Dorsolateral prefrontal cortex (tissue), 120 donors: ENCODE measurements at regions of chr11 and their contacts with region 1.

Region 1: GRCh38 chr11:66568124-66568916 is at the start of gene CTSF:
- DNase-seq: peak; percentile 88 to 97 (median 95)
- H3K4me3 ChIP-seq: peak within 1 kb of the TSS; percentile 58 to 97 (median 81)
- H3K27ac ChIP-seq: peak within 1 kb of the TSS; percentile 17 to 96 (median 86)
- H3K27me3 ChIP-seq: no peaks in the 10 kb centered on the region
- CTCF ChIP-seq: peak in 17 of 56 donors; percentile 5 to 39 (median 25)
- total RNA-seq, gene CTSF: 112 to 186 (median 141) TPM

Region 2: DNA sequence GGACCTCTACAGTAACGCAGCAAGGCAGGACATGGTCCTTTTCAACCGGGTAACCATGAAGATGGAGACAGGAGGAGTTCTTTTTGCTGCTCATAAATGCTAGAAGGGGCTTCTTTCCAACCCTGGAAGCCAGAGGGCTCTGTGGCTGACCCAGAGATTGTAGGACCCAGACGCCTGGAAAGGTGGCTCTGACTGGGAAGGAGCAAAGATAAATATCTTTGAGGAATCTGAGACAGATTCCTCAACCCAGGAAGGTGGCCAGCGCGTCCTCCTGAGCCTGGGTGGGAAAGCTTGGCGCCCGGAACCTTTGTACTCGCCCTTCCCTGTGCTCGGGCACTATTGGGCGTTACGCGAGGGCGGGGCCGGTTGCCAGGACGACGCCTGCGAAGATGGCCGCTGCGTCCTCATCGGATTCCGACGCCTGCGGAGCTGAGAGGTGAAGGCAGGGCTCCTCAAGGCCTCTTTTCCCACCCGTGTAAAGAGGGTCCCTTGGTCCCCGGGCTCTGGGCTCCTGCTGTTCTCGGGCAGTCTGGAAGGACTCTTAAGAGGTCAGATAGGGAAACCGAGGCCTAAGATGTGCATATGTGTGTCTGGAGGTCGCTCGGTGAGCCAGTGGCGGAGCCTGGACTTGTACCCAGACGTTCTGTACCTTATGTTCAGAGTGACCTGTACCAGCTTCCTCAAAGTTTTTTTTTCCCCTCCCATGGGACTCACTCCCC is 57.9 kb before region 1 on chr11 and contains the start of gene BBS1:
- intact Hi-C with region 1: loop called in 1 of 2 experiments (anchors 1 kb)
- DNase-seq: peak; percentile 76 to 93 (median 84)
- H3K4me3 ChIP-seq: peak within 1 kb of the TSS; percentile 59 to 97 (median 85)
- H3K27ac ChIP-seq: peak within 1 kb of the TSS in 56 of 59 donors; percentile 1 to 88 (median 72)
- H3K27me3 ChIP-seq: no peaks in the 10 kb centered on the region
- CTCF ChIP-seq: peak in 29 of 56 donors; percentile 5 to 64 (median 33)
- total RNA-seq, gene BBS1: 53.4 to 137 (median 93.2) TPM

Region 3: DNA sequence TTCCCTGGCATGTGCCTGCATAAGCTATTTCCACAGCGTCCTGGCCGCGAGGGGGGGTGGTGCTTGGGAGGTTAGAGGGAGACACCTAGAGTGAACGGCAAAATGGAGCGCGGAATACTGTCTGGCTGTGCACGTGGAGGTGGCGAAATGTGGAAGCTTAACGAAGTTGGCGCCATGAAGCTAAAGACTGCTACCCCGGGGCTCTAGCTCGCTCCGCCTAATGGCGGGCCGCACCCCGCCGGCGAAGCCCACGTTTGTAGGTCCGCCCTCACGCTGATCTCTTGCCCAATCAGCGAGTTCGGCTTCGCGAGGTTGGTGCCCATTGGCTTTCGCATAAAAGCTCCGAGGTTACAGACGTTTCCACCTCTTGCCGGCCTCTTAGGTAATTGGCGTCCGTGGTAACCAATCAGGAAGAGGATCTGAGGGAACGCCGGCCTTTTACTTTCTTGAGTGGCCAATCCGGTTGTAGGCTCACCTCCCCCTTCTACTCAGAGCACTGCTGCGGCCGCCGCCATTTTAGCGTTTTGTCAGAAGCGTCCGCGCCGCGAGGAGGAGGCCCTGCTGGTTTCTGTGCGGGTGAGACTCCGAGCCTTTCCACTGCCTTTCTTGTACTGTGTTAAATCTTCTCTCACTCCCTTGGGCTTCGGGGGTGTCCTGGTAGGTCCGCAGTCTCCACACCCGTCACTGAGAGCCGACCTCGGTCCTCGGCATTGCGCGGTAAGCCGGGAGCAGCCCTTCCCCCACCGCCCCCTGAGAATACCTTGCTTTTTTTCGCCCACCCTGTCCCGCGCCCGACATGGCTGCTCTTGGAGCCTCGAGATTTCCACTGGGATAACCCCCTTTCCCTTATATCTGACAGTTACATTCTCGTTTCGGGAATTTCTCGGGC is 70.1 kb after region 1 on chr11 and contains the start of gene RBM4:
- intact Hi-C with region 1: loop called in 1 of 2 experiments (anchors 2 kb)
- DNase-seq: peak; percentile 97 to 100 (median 99)
- H3K4me3 ChIP-seq: peak within 1 kb of the TSS; percentile 52 to 97 (median 81)
- H3K27ac ChIP-seq: peak within 1 kb of the TSS; percentile 52 to 97 (median 88)
- H3K27me3 ChIP-seq: no peaks in the 10 kb centered on the region
- CTCF ChIP-seq: peak in 32 of 56 donors; percentile 7 to 50 (median 24)
- total RNA-seq, gene RBM4: 72.2 to 164 (median 105) TPM